HepG2 (cell line): ENCODE measurements at regions of chr15 and their contacts with region 1.

Region 1: DNA sequence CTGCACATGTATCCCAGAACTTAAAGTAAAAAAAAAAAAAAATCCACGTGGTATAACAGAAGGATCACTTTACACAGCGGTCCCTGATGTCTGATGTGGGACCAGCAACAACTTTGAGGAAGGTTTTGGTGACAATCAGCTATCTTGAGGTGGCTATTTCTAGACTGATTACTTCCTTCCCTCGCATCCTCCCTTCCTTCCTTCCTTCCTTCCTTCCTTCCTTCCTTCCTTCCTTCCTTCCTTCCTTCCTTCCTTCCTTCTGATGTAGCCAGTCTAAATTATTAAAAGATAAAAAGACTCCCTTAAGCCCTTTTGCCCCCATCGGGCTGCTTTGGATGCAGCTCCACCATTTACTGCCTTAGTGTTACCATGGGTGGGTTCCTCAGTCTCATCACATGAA is 14.9 kb downstream of the SORD start:
- DNase-seq: no peak
- ATAC-seq: no peak
- H3K4me3 ChIP-seq: no peak overlapping the region
- H3K27ac ChIP-seq: no peak overlapping the region
- H3K4me1 ChIP-seq: peaks cover 31% of the 10 kb centered on the region
- H3K27me3 ChIP-seq: no peaks in the 10 kb centered on the region
- CTCF ChIP-seq: no peak
- EP300 ChIP-seq: no peak
- POLR2A ChIP-seq: no peak
- RAD21 ChIP-seq: no peak

Region 2: DNA sequence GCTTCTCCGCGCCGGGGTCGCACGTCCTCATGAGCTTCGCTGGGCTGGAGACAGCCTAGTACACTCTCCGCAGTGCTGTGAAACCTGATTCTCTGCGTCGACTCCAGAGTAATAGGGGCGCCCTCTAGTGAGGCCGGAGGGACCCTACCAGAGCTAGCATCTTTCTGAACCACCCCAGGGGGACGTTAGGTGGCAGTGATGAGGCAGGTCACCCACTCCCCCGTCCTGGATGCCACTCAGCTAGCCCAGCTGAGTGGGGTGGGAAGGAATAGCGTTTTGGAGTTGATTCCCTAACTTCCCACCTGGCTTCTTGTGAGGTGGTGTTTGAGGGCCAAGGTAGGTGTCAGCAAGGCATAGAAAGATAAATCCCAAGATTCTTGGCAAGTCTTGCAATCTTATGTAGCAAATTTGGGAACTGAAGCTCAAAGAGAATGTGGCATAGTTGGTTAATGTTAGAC is 80.2 kb after region 1 on chr15:
- CTCF ChIA-PET with region 1: interaction called, 5 read pairs
- POLR2A ChIA-PET with region 1: interaction called, 4 read pairs
- in situ Hi-C with region 1: no loop called
- intact Hi-C with region 1: loop called (anchors 2 kb)
- DNase-seq: peak; percentile 85
- ATAC-seq: peak; percentile 95
- H3K4me3 ChIP-seq: peak overlapping the region in 1 of 3 experiments; percentile 47; a peak in 3 of 6 replicates
- H3K27ac ChIP-seq: no peak overlapping the region
- H3K4me1 ChIP-seq: peaks cover 25% of the 10 kb centered on the region
- H3K27me3 ChIP-seq: peaks cover 5 to 36% of the 10 kb centered on the region in 2 experiments
- CTCF ChIP-seq: peak; percentile 99
- EP300 ChIP-seq: peak in 1 of 2 experiments; percentile 12; a peak in 1 of 4 replicates
- POLR2A ChIP-seq: no peak
- RAD21 ChIP-seq: peak; percentile 85